SK-N-SH (cell line): ENCODE measurements at regions of chr19 and their contacts with region 1.

Region 1: GRCh38 chr19:43555185-43555770 is 20.0 kb downstream of the XRCC1 start:
- DNase-seq: peak; percentile 85
- H3K4me3 ChIP-seq: no peak overlapping the region
- H3K27ac ChIP-seq: no peak overlapping the region
- H3K4me1 ChIP-seq: no peaks in the 10 kb centered on the region
- H3K27me3 ChIP-seq: no peaks in the 10 kb centered on the region
- CTCF ChIP-seq: peak; percentile 78
- EP300 ChIP-seq: no peak
- RAD21 ChIP-seq: peak; percentile 75

Region 2: DNA sequence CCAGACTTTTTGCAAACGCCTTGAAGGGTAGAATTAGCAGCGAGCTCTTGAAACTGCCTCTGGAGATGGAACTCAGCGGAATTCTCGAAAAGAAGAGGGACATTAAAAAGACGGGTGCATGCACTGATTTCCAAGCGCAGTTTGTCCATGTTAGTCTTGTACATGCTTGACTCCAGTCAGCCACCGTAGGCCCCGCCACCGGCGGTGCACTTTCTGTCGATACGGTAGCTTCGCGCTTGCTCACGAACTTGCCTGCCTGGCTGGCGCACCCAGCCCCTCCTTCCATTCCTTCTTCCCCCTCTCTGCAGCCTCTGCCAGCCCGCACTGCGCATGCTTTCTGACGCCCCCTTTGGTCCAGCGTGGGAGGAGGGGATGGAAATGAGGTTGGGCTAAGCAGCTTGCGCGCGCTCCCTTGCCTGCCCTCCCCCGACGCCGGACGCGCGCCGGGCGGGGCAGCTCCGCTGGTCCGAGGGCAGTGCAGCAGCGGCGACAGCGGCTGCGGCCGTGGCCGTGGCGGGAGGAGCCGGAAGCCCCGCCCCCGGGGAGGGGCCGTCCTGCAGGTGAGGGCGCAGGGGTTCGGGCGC is 22.2 kb before region 1 on chr19 and contains the start of gene ZNF575:
- CTCF ChIA-PET with region 1: interaction called, 46 read pairs
- POLR2A ChIA-PET with region 1: no interaction called
- DNase-seq: peak; percentile 93
- H3K4me3 ChIP-seq: peak within 1 kb of the TSS; percentile 59 to 63
- H3K27ac ChIP-seq: peak within 1 kb of the TSS; percentile 78 to 95
- H3K4me1 ChIP-seq: peaks cover 0 to 10% of the 10 kb centered on the region in 2 experiments; a peak in 1 of 4 replicates
- H3K27me3 ChIP-seq: no peaks in the 10 kb centered on the region
- CTCF ChIP-seq: no peak
- EP300 ChIP-seq: no peak; a peak in 1 of 4 replicates
- RAD21 ChIP-seq: no peak
- polyA plus RNA-seq, gene ZNF575: 0.31 and 1.0 TPM in 2 replicates

Region 3: DNA sequence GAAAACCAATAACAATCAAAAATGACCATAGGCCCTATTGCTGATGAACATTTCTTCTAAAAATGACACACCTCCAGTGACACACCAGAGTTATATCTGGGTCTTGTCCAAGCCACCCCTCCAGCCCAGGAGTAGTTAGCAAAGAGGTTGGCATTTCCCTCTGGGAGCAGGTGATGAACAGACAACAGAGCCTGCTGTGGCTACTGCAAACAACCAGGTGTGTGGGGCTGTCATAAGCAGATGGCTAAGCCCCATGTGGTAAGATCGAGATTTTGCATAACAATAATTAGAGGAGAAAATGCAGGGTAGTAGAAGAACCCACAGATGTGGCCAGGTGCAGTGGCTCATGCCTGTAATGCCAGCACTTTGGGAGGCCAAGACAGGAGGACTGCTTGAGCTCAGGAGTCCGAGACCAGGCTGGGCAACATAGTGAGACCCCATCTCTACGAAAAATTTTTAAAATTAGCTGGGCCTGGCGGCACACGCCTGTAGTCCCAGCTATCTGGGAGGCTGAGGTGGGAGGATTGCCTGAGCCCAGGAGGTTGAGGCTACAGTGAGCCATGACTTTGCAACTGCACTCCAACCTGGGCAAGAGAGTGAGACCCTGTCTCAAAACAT is 15.0 kb after region 1 on chr19:
- CTCF ChIA-PET with region 1: interaction called, 43 read pairs
- POLR2A ChIA-PET with region 1: no interaction called
- DNase-seq: no peak
- H3K4me3 ChIP-seq: no peak overlapping the region
- H3K27ac ChIP-seq: no peak overlapping the region
- H3K4me1 ChIP-seq: peaks cover 0 to 7% of the 10 kb centered on the region in 2 experiments; a peak in 1 of 4 replicates
- H3K27me3 ChIP-seq: no peaks in the 10 kb centered on the region
- CTCF ChIP-seq: no peak
- EP300 ChIP-seq: no peak
- RAD21 ChIP-seq: no peak

Region 4: DNA sequence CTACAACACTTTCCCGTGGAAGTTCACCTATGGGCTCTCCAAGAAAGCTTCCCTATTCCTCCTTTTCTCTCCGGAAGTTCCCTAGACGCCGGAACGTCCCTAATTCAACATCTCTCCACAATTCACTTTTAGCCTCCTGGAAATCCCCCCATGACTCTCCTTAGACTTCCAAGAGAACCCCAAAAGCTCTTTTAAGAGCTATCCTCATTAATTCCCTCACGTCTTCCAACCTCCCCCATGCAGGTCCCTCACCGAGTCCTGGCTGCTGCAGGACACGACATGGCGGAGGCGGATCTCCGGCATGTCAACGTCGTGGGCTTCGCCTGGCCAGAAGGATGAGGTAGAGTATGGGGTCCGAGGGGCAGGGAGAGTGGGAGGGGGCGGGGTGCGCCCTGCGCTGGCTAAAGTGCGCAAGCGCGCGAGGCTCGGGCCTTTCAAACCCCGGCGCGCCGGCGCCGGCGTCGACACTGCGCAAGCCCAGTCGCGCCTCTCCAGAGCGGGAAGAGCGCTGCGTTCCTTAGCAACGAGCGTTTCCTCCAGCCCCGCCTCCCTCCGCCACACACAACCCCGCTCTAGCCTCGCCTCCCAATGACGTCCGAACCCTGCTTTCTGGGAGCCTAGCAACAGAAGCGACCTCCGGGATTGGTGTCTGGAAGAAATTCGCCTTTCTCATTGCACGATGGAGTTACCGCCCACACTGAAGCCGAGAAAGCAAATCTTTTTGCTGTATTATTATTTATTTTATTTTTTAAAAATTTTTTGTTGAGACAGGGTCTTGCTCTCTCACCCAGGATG is 20.1 kb after region 1 on chr19 and contains the starts of genes PINLYP and XRCC1:
- CTCF ChIA-PET with region 1: interaction called, 43 read pairs
- POLR2A ChIA-PET with region 1: no interaction called
- DNase-seq: peak; percentile 95
- H3K4me3 ChIP-seq: peak within 1 kb of the TSS; percentile 75 to 91
- H3K27ac ChIP-seq: peak within 1 kb of the TSS; percentile 80 to 87
- H3K4me1 ChIP-seq: peaks cover 0 to 15% of the 10 kb centered on the region in 2 experiments; a peak in 1 of 4 replicates
- H3K27me3 ChIP-seq: no peaks in the 10 kb centered on the region
- CTCF ChIP-seq: no peak
- EP300 ChIP-seq: peak in 1 of 2 experiments; percentile 47; a peak in 1 of 4 replicates
- RAD21 ChIP-seq: no peak
- polyA plus RNA-seq, gene PINLYP: 5.5 and 6.5 TPM in 2 replicates
- polyA plus RNA-seq, gene XRCC1: 24.7 and 30.3 TPM in 2 replicates

Region 5: DNA sequence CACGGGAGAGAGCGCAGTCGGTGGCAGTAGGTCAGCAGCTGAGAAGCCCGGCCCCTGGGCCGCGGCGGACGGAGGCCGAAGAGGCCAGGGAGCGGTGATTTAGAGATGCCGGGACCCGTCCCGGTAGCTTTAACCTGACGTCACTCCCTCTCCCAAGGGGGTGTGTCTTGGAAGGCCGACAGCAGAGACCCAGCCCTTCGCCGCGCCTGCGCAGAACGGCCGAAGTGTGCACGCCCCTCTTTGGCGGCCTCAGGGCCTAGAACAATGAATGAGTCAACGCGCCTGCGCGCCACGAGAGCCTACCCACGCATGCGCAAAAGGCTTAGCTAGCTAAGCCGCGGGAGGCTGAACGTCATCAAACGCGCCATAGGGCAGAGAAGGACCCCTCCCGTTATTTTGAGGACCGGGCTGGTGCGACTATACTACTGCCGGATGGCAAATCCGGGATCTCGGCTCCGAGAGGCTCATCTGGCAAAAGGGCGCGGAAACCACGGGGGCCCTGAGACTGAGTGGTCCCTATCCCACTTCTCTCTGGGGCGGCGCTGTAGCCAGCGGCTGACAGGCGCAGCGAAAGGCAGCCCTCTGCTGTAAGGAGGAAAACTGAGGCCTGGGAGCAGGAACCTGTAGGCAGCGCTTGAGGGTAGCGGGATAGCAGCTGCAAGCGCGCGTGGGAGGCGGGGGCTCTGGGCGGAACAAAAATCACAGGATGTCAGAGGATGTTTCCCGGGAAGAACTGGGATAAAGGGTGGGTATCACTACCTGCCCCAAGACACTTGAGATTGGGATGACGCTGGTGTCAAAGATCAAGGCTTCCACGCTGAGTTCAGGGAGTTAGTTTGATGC is 40.9 kb after region 1 on chr19 and contains the starts of genes IRGQ and ZNF576:
- CTCF ChIA-PET with region 1: interaction called, 104 read pairs
- POLR2A ChIA-PET with region 1: interaction called, 5 read pairs
- DNase-seq: peak; percentile 97
- H3K4me3 ChIP-seq: peak within 1 kb of the TSS; percentile 72 to 98
- H3K27ac ChIP-seq: peak within 1 kb of the TSS; percentile 93 to 98
- H3K4me1 ChIP-seq: peaks cover 8 to 22% of the 10 kb centered on the region in 2 experiments; a peak in 2 of 4 replicates
- H3K27me3 ChIP-seq: no peaks in the 10 kb centered on the region
- CTCF ChIP-seq: no peak
- EP300 ChIP-seq: no peak; a peak in 1 of 4 replicates
- RAD21 ChIP-seq: no peak
- polyA plus RNA-seq, gene IRGQ: 8.4 and 10.8 TPM in 2 replicates
- polyA plus RNA-seq, gene ZNF576: 12.8 and 13.6 TPM in 2 replicates

Region 6: DNA sequence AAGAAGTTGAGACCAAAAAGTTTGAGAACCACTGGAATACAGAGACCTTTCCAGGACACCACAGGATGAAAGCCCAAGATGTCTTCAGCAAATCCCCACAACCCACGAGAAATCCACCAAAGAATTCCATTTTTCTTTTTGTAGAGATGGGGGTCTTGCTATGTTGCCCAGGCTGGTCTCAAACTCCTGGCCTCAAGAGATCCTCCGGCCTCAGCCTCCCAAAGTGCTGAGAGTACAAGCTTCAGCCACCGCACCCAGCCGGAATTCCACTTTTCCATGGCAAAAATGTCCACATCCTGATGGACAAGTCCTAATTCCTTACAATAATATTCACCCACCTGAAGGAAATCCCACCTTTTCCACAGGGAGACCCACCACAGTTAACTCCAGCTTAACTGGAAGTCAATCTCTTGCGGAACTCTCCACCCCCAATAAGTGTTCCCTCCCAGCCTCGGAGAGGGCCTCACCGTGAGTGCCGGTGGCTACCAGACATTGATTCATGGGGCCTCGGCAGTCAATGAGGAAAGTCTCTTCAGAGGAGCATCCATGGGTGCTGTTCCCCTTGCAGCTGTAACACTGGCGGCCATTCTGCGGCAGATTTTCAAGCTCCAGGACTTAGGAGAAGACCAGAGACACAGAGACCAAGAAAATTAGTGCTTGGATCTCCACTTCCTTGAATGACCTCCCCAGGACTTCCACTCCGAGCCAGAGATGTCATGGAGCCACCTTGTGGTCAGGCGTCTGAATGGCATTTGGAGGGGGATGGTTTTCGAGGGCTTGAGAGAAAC is 96.7 kb after region 1 on chr19:
- CTCF ChIA-PET with region 1: interaction called, 15 read pairs
- POLR2A ChIA-PET with region 1: no interaction called
- DNase-seq: peak; percentile 72
- H3K4me3 ChIP-seq: no peak overlapping the region; a peak in 1 of 4 replicates
- H3K27ac ChIP-seq: no peak overlapping the region; a peak in 1 of 4 replicates
- H3K4me1 ChIP-seq: no peaks in the 10 kb centered on the region
- H3K27me3 ChIP-seq: no peaks in the 10 kb centered on the region
- CTCF ChIP-seq: peak; percentile 70
- EP300 ChIP-seq: no peak
- RAD21 ChIP-seq: peak; percentile 81